ENCODE measurements at regions of chr7 and their contacts with region 1.

Region 1: DNA sequence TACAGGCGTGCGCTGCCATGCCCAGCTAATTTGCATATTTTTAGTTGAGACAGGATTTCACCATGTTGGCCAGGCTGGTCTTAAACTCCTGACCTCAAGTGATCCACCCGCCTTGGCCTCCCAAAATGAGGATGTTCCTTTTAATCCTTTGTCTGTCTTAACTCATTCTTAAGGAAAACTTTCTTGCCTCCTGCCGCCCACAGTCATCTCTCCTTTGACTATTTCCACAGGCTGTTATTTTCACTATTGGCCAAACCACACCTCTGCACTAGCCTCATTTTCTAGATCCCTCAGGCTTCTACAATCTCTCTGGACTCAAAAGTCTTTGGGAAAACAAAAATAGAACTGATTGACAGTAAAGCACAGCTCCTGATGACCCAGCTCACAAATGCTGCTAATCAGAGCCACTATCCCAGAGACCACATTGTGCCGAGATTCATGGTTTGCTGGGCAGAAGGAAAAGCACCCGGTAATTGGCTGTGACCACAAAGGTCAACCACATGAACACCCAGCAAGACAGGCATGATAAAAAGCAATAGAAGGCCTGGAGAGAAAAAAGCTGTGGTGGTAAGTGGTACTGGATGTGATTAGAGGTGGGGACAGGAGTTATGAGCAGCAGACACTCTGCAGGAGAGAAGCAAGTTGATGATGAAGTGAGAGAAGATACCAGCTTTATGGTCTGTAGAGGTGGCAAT is 44.1 kb upstream of the ZNRF2 start:
- DNase-seq: no peak
- ATAC-seq: no peak
- H3K4me3 Mint-ChIP-seq: no peak overlapping the region
- H3K27ac Mint-ChIP-seq: no peak overlapping the region
- H3K4me1 Mint-ChIP-seq: peaks cover 17% of the 10 kb centered on the region
- H3K27me3 Mint-ChIP-seq: peaks cover 4% of the 10 kb centered on the region

Region 2: DNA sequence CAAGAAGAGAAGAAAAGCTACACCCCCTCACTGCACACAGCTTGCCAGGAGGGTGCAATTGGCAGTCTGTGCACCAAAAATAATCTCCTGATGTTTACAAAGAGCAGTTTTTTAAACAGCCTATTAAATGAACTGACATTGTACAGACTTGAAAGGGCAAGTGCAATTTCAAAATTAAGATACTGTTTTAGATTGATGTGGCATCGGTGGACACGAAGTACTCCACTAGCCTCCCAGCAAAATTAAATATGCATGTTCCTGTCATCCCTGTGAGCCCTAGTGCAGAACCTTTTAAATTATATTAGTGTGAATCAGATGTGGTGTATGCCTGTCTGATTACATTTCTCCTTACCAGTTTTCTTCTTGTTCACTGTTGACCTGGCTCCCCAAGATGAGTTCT is 346.0 kb before region 1 on chr7:
- CTCF ChIA-PET with region 1: no interaction called
- POLR2A ChIA-PET with region 1: no interaction called
- intact Hi-C with region 1: no loop called
- DNase-seq: no peak
- ATAC-seq: no peak
- H3K4me3 Mint-ChIP-seq: no peak overlapping the region
- H3K27ac Mint-ChIP-seq: no peak overlapping the region
- H3K4me1 Mint-ChIP-seq: no peaks in the 10 kb centered on the region
- H3K27me3 Mint-ChIP-seq: peaks cover 8% of the 10 kb centered on the region

Region 3: GRCh38 chr7:30116771-30117170 is 123.5 kb before region 1 on chr7:
- CTCF ChIA-PET with region 1: no interaction called
- POLR2A ChIA-PET with region 1: no interaction called
- intact Hi-C with region 1: loop called in 1 of 2 experiments (anchors 5 kb)
- DNase-seq: no peak
- ATAC-seq: no peak
- H3K4me3 Mint-ChIP-seq: no peak overlapping the region
- H3K27ac Mint-ChIP-seq: no peak overlapping the region
- H3K4me1 Mint-ChIP-seq: peaks cover 5% of the 10 kb centered on the region
- H3K27me3 Mint-ChIP-seq: no peaks in the 10 kb centered on the region